GM12878 (cell line): ENCODE measurements at regions of chr14 and their contacts with region 1.

Region 1: GRCh38 chr14:91177073-91178034 is 63.5 kb downstream of the DGLUCY start:
- DNase-seq: peak; percentile 35
- ATAC-seq: peak; percentile 87
- H3K4me3 ChIP-seq: no peak overlapping the region
- H3K27ac ChIP-seq: no peak overlapping the region; the same call in 1 of the 2 replicates
- H3K4me1 ChIP-seq: no peaks in the 10 kb centered on the region
- H3K27me3 ChIP-seq: no peaks in the 10 kb centered on the region
- CTCF ChIP-seq: peak; percentile 77 to 88 (median 84)
- EP300 ChIP-seq: no peak
- POLR2A ChIP-seq: no peak
- RAD21 ChIP-seq: peak; percentile 90

Region 2: DNA sequence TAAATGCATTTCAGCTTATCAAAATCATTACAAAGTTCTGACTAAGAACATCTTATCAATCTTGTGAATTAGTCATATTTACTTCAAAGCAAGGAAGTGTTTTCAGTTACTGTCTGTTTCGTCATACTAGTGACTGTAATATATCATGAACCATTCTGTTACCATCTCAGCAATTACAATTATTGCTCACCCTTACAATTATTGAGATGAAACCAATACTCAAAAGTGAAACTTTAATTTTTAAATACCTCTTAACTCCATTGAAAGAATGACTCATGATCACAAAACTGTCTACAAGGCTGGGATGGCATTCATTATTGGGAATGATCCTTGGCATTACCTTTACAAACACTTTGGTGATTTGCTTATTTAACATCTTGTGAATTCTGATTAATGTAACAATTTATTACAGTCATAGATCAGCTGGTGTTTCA is 207.2 kb before region 1 on chr14:
- CTCF ChIA-PET with region 1: interaction called, 7 read pairs
- POLR2A ChIA-PET with region 1: no interaction called
- RAD21 ChIA-PET with region 1: interaction called, 11 read pairs
- SMC1A ChIA-PET with region 1: interaction called, 4 read pairs
- in situ Hi-C with region 1: no loop called
- intact Hi-C with region 1: no loop called
- DNase-seq: no peak
- ATAC-seq: peak; percentile 94
- H3K4me3 ChIP-seq: no peak overlapping the region
- H3K27ac ChIP-seq: no peak overlapping the region
- H3K4me1 ChIP-seq: peaks cover 13% of the 10 kb centered on the region
- H3K27me3 ChIP-seq: no peaks in the 10 kb centered on the region
- CTCF ChIP-seq: no peak
- EP300 ChIP-seq: peak in 1 of 2 experiments; percentile 42; a peak in 1 of 4 replicates
- POLR2A ChIP-seq: no peak
- RAD21 ChIP-seq: no peak

Region 3: DNA sequence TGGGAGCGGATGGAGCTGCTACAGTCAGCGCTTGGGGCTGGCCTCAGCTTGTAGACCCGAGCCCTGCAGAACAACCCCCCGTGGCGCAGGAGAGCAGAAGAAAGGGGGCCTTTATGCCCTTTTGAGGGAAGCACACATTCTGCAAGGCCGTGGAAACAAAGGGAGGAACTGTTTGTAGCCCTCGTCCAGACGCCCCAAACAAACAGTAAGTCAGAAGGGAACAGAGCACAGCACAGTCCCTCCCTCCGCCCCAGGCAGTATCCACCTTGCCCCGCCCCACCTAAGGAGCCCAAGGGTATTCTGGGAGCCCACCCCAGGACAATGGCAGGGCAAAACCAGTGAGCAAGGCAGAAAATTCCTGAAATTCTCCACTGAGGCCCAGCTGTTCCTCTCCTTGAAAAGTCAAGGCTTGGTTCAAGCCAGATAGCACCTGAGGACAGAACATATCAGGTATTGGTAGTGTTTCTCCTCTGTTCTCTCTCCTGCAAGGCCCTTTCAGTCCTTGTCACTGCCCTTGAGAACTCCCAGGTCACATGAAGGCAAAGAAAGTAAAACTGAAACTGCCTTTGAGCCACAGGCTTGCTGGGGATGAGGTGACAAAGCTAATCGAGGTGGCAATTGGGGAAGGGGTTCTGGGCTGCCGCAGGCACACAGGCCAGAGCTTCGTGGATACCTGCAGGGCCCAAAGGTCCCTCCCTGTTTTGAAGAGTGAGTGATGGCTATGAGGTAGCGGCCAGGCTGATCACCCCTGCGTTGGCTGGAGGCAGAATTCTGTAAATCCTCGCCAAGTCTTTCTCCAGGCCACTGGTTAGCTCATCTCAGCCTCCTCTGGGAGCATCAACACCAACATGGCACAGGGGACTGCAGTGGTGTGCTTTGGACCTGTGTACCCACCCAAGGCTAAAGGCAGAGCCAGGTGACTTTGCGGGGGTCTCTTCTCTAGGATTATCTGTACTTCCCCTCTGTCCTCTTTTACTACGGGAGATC is 63.0 kb before region 1 on chr14:
- CTCF ChIA-PET with region 1: interaction called, 14 read pairs
- POLR2A ChIA-PET with region 1: no interaction called
- RAD21 ChIA-PET with region 1: interaction called, 14 read pairs
- SMC1A ChIA-PET with region 1: interaction called, 15 read pairs
- in situ Hi-C with region 1: no loop called
- intact Hi-C with region 1: no loop called
- DNase-seq: peak; percentile 86
- ATAC-seq: peak; percentile 88
- H3K4me3 ChIP-seq: peak overlapping the region; percentile 100
- H3K27ac ChIP-seq: peak overlapping the region; percentile 98
- H3K4me1 ChIP-seq: peaks cover 20% of the 10 kb centered on the region
- H3K27me3 ChIP-seq: no peaks in the 10 kb centered on the region
- CTCF ChIP-seq: no peak
- EP300 ChIP-seq: 0 out of 4 replicates have a peak, but pooled peaks of 1 of the 2 experiments have one; percentile 9
- POLR2A ChIP-seq: peak; percentile 82
- RAD21 ChIP-seq: 0 out of 2 replicates have a peak, but pooled peaks have one; percentile 2

Region 4: DNA sequence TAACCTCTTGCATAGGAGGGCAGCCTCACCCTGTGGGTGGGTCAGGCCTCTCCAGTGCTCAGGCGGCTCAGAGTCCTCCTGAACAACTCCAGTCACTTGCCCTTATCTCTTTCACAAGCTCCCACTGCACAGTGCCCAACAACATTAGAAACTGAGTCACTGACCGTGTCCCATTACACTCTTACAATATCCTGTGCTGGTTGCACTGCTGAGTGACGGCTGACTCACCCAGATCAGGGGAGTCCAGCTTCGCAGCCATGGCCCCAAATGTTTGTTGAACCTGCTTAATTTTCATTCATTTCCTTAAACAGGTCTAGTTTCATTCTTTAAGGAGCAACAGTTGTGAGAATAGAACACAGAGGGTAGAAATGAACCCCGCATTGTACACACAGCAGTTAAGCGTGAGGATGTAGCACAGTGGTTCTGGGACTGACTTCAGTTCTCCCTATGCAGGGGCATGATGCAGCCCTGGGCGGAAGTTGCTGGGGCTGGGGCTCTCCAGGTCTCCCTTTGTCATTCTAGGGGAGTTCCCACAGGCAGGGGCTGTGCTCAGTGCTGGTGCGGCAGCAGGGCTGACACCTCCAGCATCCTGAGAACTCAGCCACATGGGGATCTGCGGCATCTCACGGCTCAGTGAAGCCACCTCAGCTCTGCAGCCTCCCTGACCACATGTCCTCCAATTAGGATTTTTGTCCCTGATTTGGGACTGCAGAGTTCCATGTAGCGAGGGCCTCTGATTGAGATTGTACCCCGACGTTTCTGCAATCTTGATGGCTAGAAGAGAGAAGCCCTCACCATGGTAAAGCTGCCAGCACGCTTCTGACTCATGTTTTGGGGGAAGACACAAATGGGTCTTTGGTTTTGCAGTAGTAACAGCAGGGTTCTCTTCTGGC is 51.0 kb after region 1 on chr14:
- CTCF ChIA-PET with region 1: interaction called, 16 read pairs
- POLR2A ChIA-PET with region 1: no interaction called
- RAD21 ChIA-PET with region 1: interaction called, 4 read pairs
- SMC1A ChIA-PET with region 1: interaction called, 4 read pairs
- in situ Hi-C with region 1: no loop called
- intact Hi-C with region 1: no loop called
- DNase-seq: peak; percentile 86
- ATAC-seq: peak; percentile 89
- H3K4me3 ChIP-seq: 0 out of 2 replicates have a peak overlapping the region, but pooled peaks have one; percentile 4
- H3K27ac ChIP-seq: peak overlapping the region; percentile 92
- H3K4me1 ChIP-seq: peaks cover 53% of the 10 kb centered on the region
- H3K27me3 ChIP-seq: no peaks in the 10 kb centered on the region
- CTCF ChIP-seq: no peak
- EP300 ChIP-seq: peak; percentile 37 to 78; a peak in 2 of 4 replicates
- POLR2A ChIP-seq: peak; percentile 63
- RAD21 ChIP-seq: no peak

Region 5: GRCh38 chr14:91264151-91265150 is 87.1 kb after region 1 on chr14:
- CTCF ChIA-PET with region 1: interaction called, 10 read pairs
- POLR2A ChIA-PET with region 1: no interaction called
- RAD21 ChIA-PET with region 1: no interaction called
- SMC1A ChIA-PET with region 1: interaction called, 4 read pairs
- in situ Hi-C with region 1: no loop called
- intact Hi-C with region 1: no loop called
- DNase-seq: no peak
- ATAC-seq: peak; percentile 63
- H3K4me3 ChIP-seq: no peak overlapping the region
- H3K27ac ChIP-seq: no peak overlapping the region
- H3K4me1 ChIP-seq: no peaks in the 10 kb centered on the region
- H3K27me3 ChIP-seq: peaks cover 0 to 4% of the 10 kb centered on the region in 2 experiments; a peak in 1 of 4 replicates
- CTCF ChIP-seq: no peak
- EP300 ChIP-seq: no peak
- POLR2A ChIP-seq: 0 out of 2 replicates have a peak, but pooled peaks have one; percentile 39
- RAD21 ChIP-seq: no peak

Region 6: DNA sequence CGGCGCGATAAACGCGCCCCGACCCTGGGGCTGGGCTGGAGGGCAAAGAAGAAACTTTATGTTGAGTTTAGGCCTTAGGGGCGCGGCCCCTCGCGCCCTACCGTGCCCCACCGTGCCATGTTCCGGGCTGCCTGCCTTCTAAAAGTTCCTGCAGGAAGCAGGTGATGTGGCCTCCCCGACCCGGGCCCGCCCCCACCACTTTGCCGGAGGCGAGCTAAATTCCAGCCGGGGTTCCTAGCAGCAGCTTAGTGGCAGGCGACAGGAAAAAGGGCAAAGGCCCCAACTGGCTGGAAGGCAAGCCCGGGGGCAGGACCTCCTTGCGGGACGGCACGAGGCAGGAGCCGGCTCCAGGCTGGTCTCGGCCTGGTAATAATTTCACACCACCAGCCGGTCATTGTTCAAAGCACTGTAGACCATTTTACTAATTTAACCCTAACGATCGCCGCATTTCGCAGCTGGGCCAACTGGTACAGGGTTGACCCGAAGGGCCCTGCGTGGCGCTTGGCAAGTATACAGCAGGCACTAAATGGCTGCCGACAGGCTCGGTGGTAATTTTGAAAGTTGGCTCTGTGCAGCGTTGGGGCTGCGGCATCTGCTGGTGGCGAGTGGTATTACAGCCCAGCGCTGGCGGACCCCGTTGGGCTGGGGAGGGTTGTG is 241.2 kb after region 1 on chr14:
- CTCF ChIA-PET with region 1: interaction called, 7 read pairs
- POLR2A ChIA-PET with region 1: no interaction called
- RAD21 ChIA-PET with region 1: interaction called, 15 read pairs
- SMC1A ChIA-PET with region 1: interaction called, 8 read pairs
- in situ Hi-C with region 1: loop called (anchors 5 kb)
- intact Hi-C with region 1: loop called (anchors 2 kb)
- DNase-seq: no peak
- ATAC-seq: peak; percentile 49
- H3K4me3 ChIP-seq: peak overlapping the region; percentile 43
- H3K27ac ChIP-seq: peak overlapping the region; percentile 61
- H3K4me1 ChIP-seq: peaks cover 26% of the 10 kb centered on the region
- H3K27me3 ChIP-seq: no peaks in the 10 kb centered on the region
- CTCF ChIP-seq: peak; percentile 98 to 99 (median 99); a peak in 5 of 6 replicates
- EP300 ChIP-seq: no peak
- POLR2A ChIP-seq: no peak
- RAD21 ChIP-seq: peak; percentile 96